Activated T-helper 1 cell treated with anti-CD3 and anti-CD28 coated beads, Interleukin-12 subunit alpha, Interleukin-12 subunit beta, Interleukin-2, Interleukin-4 antibody, amounts not matched to agents 30 ng/mL and 10 ng/mL and 1 ng/mL, durations not matched to agents 14 hours and 24 hours and 36 hours (primary cell): ENCODE measurements at regions of chr2 and their contacts with region 1.

Region 1: GRCh38 chr2:223957092-223957851 is at the start of gene MRPL44:
- DNase-seq: peak; percentile 96
- H3K4me3 Mint-ChIP-seq: peak within 1 kb of the TSS; percentile 96
- H3K27ac Mint-ChIP-seq: peak within 1 kb of the TSS; percentile 91
- H3K4me1 Mint-ChIP-seq: peaks cover 79% of the 10 kb centered on the region
- H3K27me3 Mint-ChIP-seq: no peaks in the 10 kb centered on the region
- total RNA-seq, gene MRPL44: 32.7 and 35.0 TPM in 2 replicates

Region 2: DNA sequence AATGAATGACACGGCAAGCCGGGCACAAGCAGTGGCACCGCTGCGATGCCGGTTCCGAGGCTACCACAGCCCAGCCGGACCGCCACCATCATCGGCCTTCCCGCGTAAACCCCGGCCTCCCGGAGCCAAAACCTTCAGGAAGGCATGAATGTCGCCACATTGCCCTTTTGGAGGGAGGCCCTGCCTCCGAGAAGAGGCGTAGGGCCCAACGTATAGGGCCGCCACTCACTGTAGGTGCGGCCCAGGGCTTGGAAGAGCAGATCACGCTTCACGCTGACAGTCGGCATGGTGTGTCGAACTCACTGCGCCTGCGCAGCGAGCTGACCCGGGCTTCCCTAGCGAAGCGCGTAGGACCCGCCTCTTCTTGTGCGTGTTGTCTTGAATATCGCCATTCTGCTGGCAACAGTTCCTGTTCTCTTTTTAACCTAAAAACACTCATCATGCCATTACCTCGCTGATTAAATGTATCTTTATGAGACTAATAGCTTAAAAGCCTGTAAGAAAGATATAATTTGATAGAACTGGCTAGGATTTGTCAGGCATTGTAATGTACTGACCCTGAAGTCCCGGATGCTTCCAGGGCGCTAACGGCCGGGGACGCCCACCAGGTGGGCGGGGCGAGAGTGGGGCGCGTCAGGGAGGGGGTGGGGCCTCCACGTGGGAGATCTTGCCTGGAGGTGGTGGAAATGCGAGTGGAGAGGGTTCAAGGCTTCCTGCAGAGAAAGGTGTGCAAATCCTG is 1301.3 kb before region 1 on chr2 and contains the start of gene FARSB:
- intact Hi-C with region 1: loop called (anchors 5 kb)
- DNase-seq: peak; percentile 90
- H3K4me3 Mint-ChIP-seq: peak within 1 kb of the TSS; percentile 95
- H3K27ac Mint-ChIP-seq: peak within 1 kb of the TSS; percentile 87
- H3K4me1 Mint-ChIP-seq: peaks cover 36% of the 10 kb centered on the region
- H3K27me3 Mint-ChIP-seq: no peaks in the 10 kb centered on the region
- total RNA-seq, gene FARSB: 48.9 and 53.4 TPM in 2 replicates

Region 3: DNA sequence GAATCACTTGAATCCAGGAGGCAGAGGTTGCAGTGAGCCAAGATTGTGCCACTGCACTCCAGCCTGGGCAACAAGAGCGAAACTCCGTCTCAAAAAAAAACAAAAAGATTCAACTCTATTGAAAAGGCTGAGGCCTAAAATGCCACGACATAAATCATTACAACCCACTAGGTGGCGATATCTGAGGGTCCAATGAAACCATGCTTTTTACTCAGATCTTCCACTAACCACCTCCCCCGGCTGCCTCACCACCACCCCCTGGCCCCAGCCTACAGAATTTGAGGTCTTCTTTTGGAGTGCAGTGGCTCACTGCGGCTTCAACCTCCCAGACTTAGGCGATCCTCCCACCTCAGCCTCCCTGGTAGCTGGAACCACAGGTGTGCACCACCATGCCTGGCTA is 177.4 kb before region 1 on chr2:
- intact Hi-C with region 1: loop called (anchors 5 kb)
- DNase-seq: peak; percentile 9
- H3K4me3 Mint-ChIP-seq: no peak overlapping the region
- H3K27ac Mint-ChIP-seq: no peak overlapping the region
- H3K4me1 Mint-ChIP-seq: no peaks in the 10 kb centered on the region
- H3K27me3 Mint-ChIP-seq: no peaks in the 10 kb centered on the region

Region 4: DNA sequence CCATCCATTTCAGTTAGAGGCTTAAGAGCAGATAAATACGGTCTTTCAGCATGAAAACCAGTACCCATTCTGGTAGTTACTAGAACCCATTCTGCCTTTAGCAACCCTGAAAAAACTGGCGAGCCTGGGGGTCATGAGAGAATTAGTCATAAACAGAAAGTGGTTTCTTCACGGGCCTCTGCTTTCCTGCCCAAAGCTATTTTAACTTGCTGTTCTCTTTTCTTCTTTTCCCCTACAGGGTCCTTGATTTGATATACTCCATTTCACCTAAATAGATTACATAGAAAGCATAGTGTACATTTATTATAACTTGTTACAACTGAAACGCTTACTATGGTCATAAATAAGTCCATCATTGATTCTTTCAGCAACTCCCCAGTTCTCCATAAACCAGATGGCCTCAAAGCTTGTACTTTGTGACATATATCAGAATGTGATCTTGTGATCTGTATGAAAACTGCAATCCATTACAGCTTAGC is 60.4 kb before region 1 on chr2:
- intact Hi-C with region 1: loop called (anchors 5 kb)
- DNase-seq: no peak
- H3K4me3 Mint-ChIP-seq: peak overlapping the region; percentile 1
- H3K27ac Mint-ChIP-seq: no peak overlapping the region
- H3K4me1 Mint-ChIP-seq: peaks cover 22% of the 10 kb centered on the region
- H3K27me3 Mint-ChIP-seq: no peaks in the 10 kb centered on the region

Region 5: DNA sequence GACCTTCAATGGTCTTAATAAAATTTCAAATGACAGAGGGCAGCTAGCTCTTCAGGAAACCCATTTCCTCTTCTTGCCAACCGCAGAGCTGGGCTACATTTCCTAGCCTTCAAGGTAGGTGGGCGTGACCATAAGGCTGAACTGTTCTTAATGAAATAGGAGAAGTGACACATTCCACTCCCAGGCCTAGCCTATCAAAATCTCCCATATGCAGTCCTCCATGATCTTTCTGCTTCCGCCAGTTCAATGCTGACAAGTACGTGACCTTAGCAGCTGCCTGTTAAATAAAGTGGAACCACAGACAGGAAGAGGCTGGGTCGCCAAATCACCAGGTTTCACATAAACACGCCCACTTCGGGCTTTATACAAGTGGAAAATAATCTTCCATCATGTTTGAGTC is 68.6 kb after region 1 on chr2:
- intact Hi-C with region 1: loop called (anchors 1 kb)
- DNase-seq: peak; percentile 65
- H3K4me3 Mint-ChIP-seq: peak overlapping the region; percentile 51
- H3K27ac Mint-ChIP-seq: peak overlapping the region; percentile 87
- H3K4me1 Mint-ChIP-seq: peaks cover 77% of the 10 kb centered on the region
- H3K27me3 Mint-ChIP-seq: no peaks in the 10 kb centered on the region

Region 6: GRCh38 chr2:224260372-224261020 is 303.2 kb after region 1 on chr2:
- intact Hi-C with region 1: no loop called
- DNase-seq: no peak
- H3K4me3 Mint-ChIP-seq: no peak overlapping the region
- H3K27ac Mint-ChIP-seq: no peak overlapping the region
- H3K4me1 Mint-ChIP-seq: peaks cover 12% of the 10 kb centered on the region
- H3K27me3 Mint-ChIP-seq: peaks cover 3% of the 10 kb centered on the region

Region 7: GRCh38 chr2:224520064-224520463 is 562.8 kb after region 1 on chr2:
- intact Hi-C with region 1: loop called (anchors 10 kb)
- DNase-seq: peak; percentile 16
- H3K4me3 Mint-ChIP-seq: no peak overlapping the region
- H3K27ac Mint-ChIP-seq: peak overlapping the region; percentile 68
- H3K4me1 Mint-ChIP-seq: peaks cover 48% of the 10 kb centered on the region
- H3K27me3 Mint-ChIP-seq: no peaks in the 10 kb centered on the region